ENCODE measurements at regions of chr6 and their contacts with region 1.

Region 1: DNA sequence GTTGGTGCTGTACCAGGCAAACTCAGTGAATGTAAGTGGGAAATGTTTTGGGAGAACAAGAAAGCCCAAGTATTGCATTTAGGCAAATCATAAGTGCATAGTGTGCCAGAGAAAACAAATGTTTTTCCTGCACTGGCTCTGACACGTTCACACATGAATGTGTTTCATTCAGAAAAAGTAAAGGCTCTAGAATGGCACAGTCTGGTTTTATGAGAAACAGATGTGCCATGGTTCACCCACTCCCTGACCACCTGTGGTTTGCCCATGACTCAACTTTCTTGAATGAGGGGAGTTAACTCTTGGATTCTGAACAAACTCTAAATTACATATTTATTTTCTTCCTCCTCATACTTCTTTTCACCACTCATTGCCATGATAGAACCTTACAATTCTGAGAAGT is 126.9 kb downstream of the KCNQ5 start:
- DNase-seq: no peak
- ATAC-seq: no peak
- H3K4me3 ChIP-seq: no peak overlapping the region
- H3K27ac ChIP-seq: no peak overlapping the region
- H3K4me1 ChIP-seq: peaks cover 18 to 26% of the 10 kb centered on the region in 2 donors
- H3K27me3 ChIP-seq: no peaks in the 10 kb centered on the region
- CTCF ChIP-seq: no peak
- POLR2A ChIP-seq: no peak

Region 2: DNA sequence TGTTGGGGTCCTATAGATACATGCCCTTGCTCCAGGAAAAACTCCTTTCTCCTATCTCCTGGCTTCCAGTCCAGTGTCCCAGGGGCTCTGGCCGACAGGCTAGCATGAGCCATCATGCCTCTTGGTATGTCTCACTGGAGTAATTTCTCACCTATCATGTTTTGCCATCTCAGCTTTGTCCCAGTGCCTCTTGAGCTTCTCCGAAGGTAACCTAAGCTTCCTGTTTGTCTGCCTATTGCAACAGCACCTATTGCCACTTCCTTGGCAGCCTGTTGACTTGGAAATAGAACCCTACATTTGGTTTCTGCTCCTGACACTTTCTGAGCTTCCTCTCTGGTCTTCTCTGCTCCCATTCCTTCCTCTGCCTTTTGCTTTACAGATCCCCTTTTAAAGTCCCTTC is 70.8 kb after region 1 on chr6:
- in situ Hi-C with region 1: no loop called
- intact Hi-C with region 1: loop called (anchors 5 kb)
- DNase-seq: peak; percentile 76 to 89
- ATAC-seq: peak; percentile 99 to 100
- H3K4me3 ChIP-seq: no peak overlapping the region
- H3K27ac ChIP-seq: peak overlapping the region; percentile 83 to 84 (median 83)
- H3K4me1 ChIP-seq: peaks cover 48 to 55% of the 10 kb centered on the region in 2 donors
- H3K27me3 ChIP-seq: no peaks in the 10 kb centered on the region
- CTCF ChIP-seq: no peak
- POLR2A ChIP-seq: no peak

Region 3: GRCh38 chr6:72950114-72950860 is 201.5 kb after region 1 on chr6:
- in situ Hi-C with region 1: no loop called
- intact Hi-C with region 1: loop called (anchors 2 kb)
- DNase-seq: peak; percentile 10 to 27
- ATAC-seq: peak; percentile 93 to 97
- H3K4me3 ChIP-seq: peak overlapping the region in 2 of 4 donors; percentile 0 to 10
- H3K27ac ChIP-seq: peak overlapping the region; percentile 73 to 83 (median 80)
- H3K4me1 ChIP-seq: peaks cover 50 to 78% of the 10 kb centered on the region in 2 donors
- H3K27me3 ChIP-seq: no peaks in the 10 kb centered on the region
- CTCF ChIP-seq: no peak
- POLR2A ChIP-seq: no peak

Region 4: DNA sequence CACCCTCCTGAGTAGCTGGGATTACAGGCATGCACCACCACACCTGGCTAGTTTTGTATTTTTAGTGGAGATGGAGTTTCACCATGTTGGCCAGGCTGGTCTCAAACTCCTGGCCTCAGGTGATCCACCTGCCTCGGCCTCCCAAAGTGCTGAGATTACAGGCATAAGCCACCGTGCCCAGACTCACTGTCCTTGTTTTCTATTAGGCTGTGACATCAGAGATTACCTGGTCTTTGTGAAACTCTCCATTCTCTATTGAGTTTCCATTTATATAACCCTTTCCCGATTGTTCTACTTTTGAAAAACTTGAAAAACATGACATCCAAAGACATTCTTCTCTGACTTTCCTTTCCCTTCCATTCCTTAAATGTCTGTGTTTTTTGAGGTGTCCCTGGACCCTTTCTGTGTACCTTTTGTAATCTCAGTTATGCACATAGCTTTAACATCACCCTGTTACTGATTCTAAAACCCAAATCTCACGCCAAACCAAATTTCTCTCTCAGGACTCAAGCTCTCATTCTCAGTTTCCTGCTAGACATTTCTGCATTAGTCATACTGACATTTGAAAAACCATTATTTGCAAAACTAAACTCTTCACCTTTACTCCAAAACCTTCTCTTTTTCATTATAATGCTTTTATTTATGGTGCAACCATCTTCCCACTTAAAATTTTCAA is 339.5 kb after region 1 on chr6:
- in situ Hi-C with region 1: no loop called
- intact Hi-C with region 1: no loop called
- DNase-seq: no peak
- ATAC-seq: no peak
- H3K4me3 ChIP-seq: no peak overlapping the region
- H3K27ac ChIP-seq: no peak overlapping the region
- H3K4me1 ChIP-seq: no peaks in the 10 kb centered on the region
- H3K27me3 ChIP-seq: no peaks in the 10 kb centered on the region
- CTCF ChIP-seq: no peak
- POLR2A ChIP-seq: no peak

Measured in gastrocnemius medialis (tissue), 4 donors.